ENCODE measurements at regions of chr16 and their contacts with region 1.

Region 1: GRCh38 chr16:71808593-71809459 is at the start of gene AP1G1:
- DNase-seq: peak; percentile 84 to 99 (median 90)
- ATAC-seq: peak; percentile 87
- H3K4me3 ChIP-seq: peak within 1 kb of the TSS; percentile 91
- H3K4me3 Mint-ChIP-seq: peak within 1 kb of the TSS; percentile 100
- H3K27ac ChIP-seq: peak within 1 kb of the TSS; percentile 98 to 99
- H3K27ac Mint-ChIP-seq: peak within 1 kb of the TSS; percentile 100
- H3K4me1 ChIP-seq: peaks cover 43% of the 10 kb centered on the region
- H3K4me1 Mint-ChIP-seq: peaks cover 47% of the 10 kb centered on the region
- H3K27me3 ChIP-seq: no peaks in the 10 kb centered on the region
- H3K27me3 Mint-ChIP-seq: no peaks in the 10 kb centered on the region
- CTCF ChIP-seq: no peak
- total RNA-seq, gene AP1G1: 171 to 175 TPM

Region 2: DNA sequence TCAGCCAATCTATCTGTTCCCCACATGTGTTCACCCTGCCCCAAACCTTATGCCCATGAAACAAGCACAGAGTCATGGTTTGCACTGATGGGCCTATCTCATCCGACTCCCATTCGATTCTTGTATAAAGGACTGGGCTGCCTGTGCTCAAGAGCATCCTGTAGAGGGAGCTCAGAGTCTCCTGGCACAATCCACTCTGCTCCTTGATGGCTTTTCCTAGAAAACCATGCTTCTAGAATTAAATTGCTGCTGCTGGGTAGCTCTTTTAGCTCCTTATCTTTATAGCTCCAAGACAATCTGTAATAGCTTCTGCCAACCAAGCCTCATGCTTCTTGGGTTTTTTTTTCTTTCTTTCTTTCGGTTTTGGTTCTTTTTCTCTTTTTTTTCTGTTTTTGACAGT is 329.4 kb before region 1 on chr16:
- CTCF ChIA-PET with region 1: no interaction called
- POLR2A ChIA-PET with region 1: no interaction called
- intact Hi-C with region 1: no loop called
- DNase-seq: no peak
- ATAC-seq: no peak
- H3K4me3 ChIP-seq: no peak overlapping the region
- H3K4me3 Mint-ChIP-seq: no peak overlapping the region
- H3K27ac ChIP-seq: no peak overlapping the region
- H3K27ac Mint-ChIP-seq: no peak overlapping the region
- H3K4me1 ChIP-seq: peaks cover 11% of the 10 kb centered on the region
- H3K4me1 Mint-ChIP-seq: peaks cover 9% of the 10 kb centered on the region
- H3K27me3 ChIP-seq: no peaks in the 10 kb centered on the region
- H3K27me3 Mint-ChIP-seq: no peaks in the 10 kb centered on the region
- CTCF ChIP-seq: no peak

Region 3: GRCh38 chr16:71723537-71724319 is 85.1 kb before region 1 on chr16:
- CTCF ChIA-PET with region 1: no interaction called
- POLR2A ChIA-PET with region 1: interaction called, 8 read pairs
- intact Hi-C with region 1: loop called (anchors 2 kb)
- DNase-seq: peak; percentile 59 to 93 (median 78)
- ATAC-seq: peak; percentile 81
- H3K4me3 ChIP-seq: peak overlapping the region; percentile 84
- H3K4me3 Mint-ChIP-seq: peak overlapping the region; percentile 92
- H3K27ac ChIP-seq: no peak overlapping the region
- H3K27ac Mint-ChIP-seq: peak overlapping the region; percentile 74
- H3K4me1 ChIP-seq: peaks cover 11% of the 10 kb centered on the region
- H3K4me1 Mint-ChIP-seq: peaks cover 18% of the 10 kb centered on the region
- H3K27me3 ChIP-seq: no peaks in the 10 kb centered on the region
- H3K27me3 Mint-ChIP-seq: no peaks in the 10 kb centered on the region
- CTCF ChIP-seq: no peak

Region 4: DNA sequence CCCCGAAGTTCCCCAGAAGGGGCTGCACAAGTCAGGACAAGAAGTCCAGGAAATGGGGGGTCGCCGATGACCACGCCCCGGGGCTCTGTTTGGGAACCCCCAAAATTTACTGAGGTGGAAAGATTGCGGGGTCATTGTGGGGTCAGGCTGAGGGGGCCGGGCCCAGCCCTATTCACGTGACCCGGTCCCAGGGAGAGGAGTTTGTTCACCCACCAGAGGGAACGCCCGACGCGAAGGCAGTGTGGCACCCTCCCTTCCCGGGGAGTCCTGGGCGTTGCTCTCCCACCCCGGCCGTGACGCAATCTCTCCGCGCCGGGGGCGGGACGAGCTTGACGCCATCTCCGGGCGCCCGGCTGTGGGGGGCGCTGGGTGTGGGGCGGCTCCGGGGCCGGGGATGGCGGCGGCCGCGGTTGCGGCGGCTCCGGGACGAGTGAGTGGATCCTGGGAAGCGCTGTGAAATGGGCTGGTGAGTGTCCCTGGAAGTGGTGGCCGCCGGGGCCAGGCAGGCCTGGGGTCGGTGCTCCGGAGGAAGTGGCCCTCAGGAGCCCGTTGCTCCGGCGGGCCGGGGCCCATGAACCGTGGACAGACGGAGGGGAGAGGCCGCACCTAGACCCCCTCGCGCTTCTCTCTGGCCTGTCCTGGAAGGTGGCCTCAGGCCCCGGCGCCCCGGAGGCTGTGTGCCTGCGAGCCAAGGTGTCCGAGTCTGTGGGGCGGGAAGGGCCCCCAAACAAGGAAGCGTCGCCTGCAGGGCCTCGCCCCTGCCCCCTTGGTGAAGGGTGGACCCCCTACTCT is 37.0 kb after region 1 on chr16 and contains the start of gene ATXN1L:
- CTCF ChIA-PET with region 1: interaction called, 3 read pairs
- POLR2A ChIA-PET with region 1: interaction called, 12 read pairs
- intact Hi-C with region 1: loop called (anchors 1 kb)
- DNase-seq: peak; percentile 84 to 97 (median 90)
- ATAC-seq: peak; percentile 91
- H3K4me3 ChIP-seq: peak within 1 kb of the TSS; percentile 97
- H3K4me3 Mint-ChIP-seq: peak within 1 kb of the TSS; percentile 96
- H3K27ac ChIP-seq: peak within 1 kb of the TSS; percentile 82 to 91
- H3K27ac Mint-ChIP-seq: peak within 1 kb of the TSS; percentile 99
- H3K4me1 ChIP-seq: peaks cover 18% of the 10 kb centered on the region
- H3K4me1 Mint-ChIP-seq: peaks cover 35% of the 10 kb centered on the region
- H3K27me3 ChIP-seq: no peaks in the 10 kb centered on the region
- H3K27me3 Mint-ChIP-seq: no peaks in the 10 kb centered on the region
- CTCF ChIP-seq: no peak
- total RNA-seq, gene ATXN1L: 61.0 to 61.1 TPM

Region 5: GRCh38 chr16:71961066-71962039 is 152.5 kb after region 1 on chr16:
- CTCF ChIA-PET with region 1: interaction called, 4 read pairs
- POLR2A ChIA-PET with region 1: interaction called, 6 read pairs
- intact Hi-C with region 1: loop called in 1 of 2 experiments (anchors 2 kb)
- DNase-seq: peak; percentile 67 to 90 (median 78)
- ATAC-seq: peak; percentile 91
- H3K4me3 ChIP-seq: no peak overlapping the region
- H3K4me3 Mint-ChIP-seq: no peak overlapping the region
- H3K27ac ChIP-seq: no peak overlapping the region
- H3K27ac Mint-ChIP-seq: no peak overlapping the region
- H3K4me1 ChIP-seq: peaks cover 6% of the 10 kb centered on the region
- H3K4me1 Mint-ChIP-seq: peaks cover 11% of the 10 kb centered on the region
- H3K27me3 ChIP-seq: no peaks in the 10 kb centered on the region
- H3K27me3 Mint-ChIP-seq: no peaks in the 10 kb centered on the region
- CTCF ChIP-seq: peak; percentile 80

Region 6: GRCh38 chr16:72093448-72094265 is 284.8 kb after region 1 on chr16 and contains the starts of genes DHX38 and TXNL4B:
- CTCF ChIA-PET with region 1: no interaction called
- POLR2A ChIA-PET with region 1: interaction called, 4 read pairs
- intact Hi-C with region 1: loop called in 1 of 2 experiments (anchors 2 kb)
- DNase-seq: peak; percentile 79 to 98 (median 86)
- ATAC-seq: peak; percentile 97
- H3K4me3 ChIP-seq: peak within 1 kb of the TSS; percentile 88
- H3K4me3 Mint-ChIP-seq: peak within 1 kb of the TSS; percentile 95
- H3K27ac ChIP-seq: peak within 1 kb of the TSS; percentile 91
- H3K27ac Mint-ChIP-seq: peak within 1 kb of the TSS; percentile 94
- H3K4me1 ChIP-seq: peaks cover 27% of the 10 kb centered on the region
- H3K4me1 Mint-ChIP-seq: peaks cover 71% of the 10 kb centered on the region
- H3K27me3 ChIP-seq: no peaks in the 10 kb centered on the region
- H3K27me3 Mint-ChIP-seq: no peaks in the 10 kb centered on the region
- CTCF ChIP-seq: no peak
- total RNA-seq, gene DHX38: 103 to 109 TPM
- total RNA-seq, gene TXNL4B: 11.5 to 15.0 TPM

Measured in CD4-positive, alpha-beta T cell (primary cell).